ENCODE measurements at regions of chrX and their contacts with region 1.

Region 1: GRCh38 chrX:119130911-119131310 is 3.3 kb upstream of the KIAA1210 start:
- DNase-seq: no peak
- H3K4me3 ChIP-seq: no peak overlapping the region
- H3K27ac ChIP-seq: no peak overlapping the region
- H3K4me1 ChIP-seq: no peaks in the 10 kb centered on the region
- H3K27me3 ChIP-seq: peaks cover 48% of the 10 kb centered on the region; the same call in 1 of the 2 replicates
- CTCF ChIP-seq: no peak
- EP300 ChIP-seq: no peak
- RAD21 ChIP-seq: no peak

Region 2: GRCh38 chrX:119118780-119119395 is 12.0 kb before region 1 on chrX:
- CTCF ChIA-PET with region 1: interaction called, 13 read pairs
- POLR2A ChIA-PET with region 1: no interaction called
- DNase-seq: peak; percentile 53
- H3K4me3 ChIP-seq: no peak overlapping the region
- H3K27ac ChIP-seq: no peak overlapping the region
- H3K4me1 ChIP-seq: no peaks in the 10 kb centered on the region
- H3K27me3 ChIP-seq: peaks cover 78% of the 10 kb centered on the region
- CTCF ChIP-seq: peak; percentile 74
- EP300 ChIP-seq: no peak
- RAD21 ChIP-seq: peak; percentile 68

Region 3: GRCh38 chrX:119145241-119145653 is 14.3 kb after region 1 on chrX:
- CTCF ChIA-PET with region 1: no interaction called
- POLR2A ChIA-PET with region 1: no interaction called
- DNase-seq: no peak
- H3K4me3 ChIP-seq: no peak overlapping the region
- H3K27ac ChIP-seq: no peak overlapping the region
- H3K4me1 ChIP-seq: no peaks in the 10 kb centered on the region
- H3K27me3 ChIP-seq: peaks cover 34% of the 10 kb centered on the region
- CTCF ChIP-seq: peak; percentile 54
- EP300 ChIP-seq: no peak
- RAD21 ChIP-seq: peak; percentile 42

Region 4: GRCh38 chrX:119155416-119156035 is 24.6 kb after region 1 on chrX:
- CTCF ChIA-PET with region 1: no interaction called
- POLR2A ChIA-PET with region 1: no interaction called
- DNase-seq: no peak
- H3K4me3 ChIP-seq: no peak overlapping the region
- H3K27ac ChIP-seq: no peak overlapping the region
- H3K4me1 ChIP-seq: no peaks in the 10 kb centered on the region
- H3K27me3 ChIP-seq: peaks cover 37% of the 10 kb centered on the region; the same call in 1 of the 2 replicates
- CTCF ChIP-seq: no peak
- EP300 ChIP-seq: no peak
- RAD21 ChIP-seq: no peak

Region 5: GRCh38 chrX:119249836-119250340 is 119.0 kb after region 1 on chrX:
- CTCF ChIA-PET with region 1: no interaction called
- POLR2A ChIA-PET with region 1: no interaction called
- DNase-seq: no peak
- H3K4me3 ChIP-seq: no peak overlapping the region
- H3K27ac ChIP-seq: no peak overlapping the region
- H3K4me1 ChIP-seq: no peaks in the 10 kb centered on the region
- H3K27me3 ChIP-seq: no peaks in the 10 kb centered on the region
- CTCF ChIP-seq: no peak
- EP300 ChIP-seq: no peak
- RAD21 ChIP-seq: no peak

Region 6: DNA sequence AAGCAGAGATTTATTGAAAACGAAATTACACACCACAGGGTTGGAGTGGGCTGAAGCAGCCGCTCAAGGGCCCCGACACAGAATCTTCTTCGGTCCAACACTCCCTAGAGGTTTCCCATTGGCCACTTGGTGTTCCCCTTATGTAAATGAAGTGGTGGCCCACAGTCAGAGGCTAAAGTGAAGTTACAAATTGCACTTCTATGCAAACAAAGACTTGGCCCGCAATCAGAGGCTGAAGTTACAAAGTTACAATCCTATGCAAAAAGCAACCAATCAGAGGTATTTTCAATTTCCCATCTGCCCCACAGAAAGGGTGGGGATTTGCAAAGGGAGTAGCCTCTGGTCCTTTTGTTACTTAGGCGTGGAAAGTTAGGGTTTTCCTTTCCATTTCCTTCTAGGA is 232.5 kb after region 1 on chrX:
- CTCF ChIA-PET with region 1: no interaction called
- POLR2A ChIA-PET with region 1: no interaction called
- DNase-seq: no peak
- H3K4me3 ChIP-seq: no peak overlapping the region
- H3K27ac ChIP-seq: no peak overlapping the region
- H3K4me1 ChIP-seq: no peaks in the 10 kb centered on the region
- H3K27me3 ChIP-seq: peaks cover 14% of the 10 kb centered on the region; the same call in 1 of the 2 replicates
- CTCF ChIP-seq: no peak
- EP300 ChIP-seq: no peak
- RAD21 ChIP-seq: no peak

Measured in SK-N-SH (cell line).